HCT116 (cell line): ENCODE measurements at regions of chr2 and their contacts with region 1.

Region 1: GRCh38 chr2:219543601-219544358 is at the starts of genes CHPF and TMEM198:
- DNase-seq: peak; percentile 97
- ATAC-seq: peak; percentile 71
- H3K4me3 ChIP-seq: peak within 1 kb of the TSS; percentile 75 to 99
- H3K27ac ChIP-seq: peak within 1 kb of the TSS; percentile 97
- H3K4me1 ChIP-seq: peaks cover under 1 to 47% of the 10 kb centered on the region in 2 experiments; a peak in 3 of 4 replicates
- H3K27me3 ChIP-seq: no peaks in the 10 kb centered on the region
- CTCF ChIP-seq: no peak
- POLR2A ChIP-seq: peak; percentile 21
- RAD21 ChIP-seq: no peak
- total RNA-seq, gene CHPF: 228 TPM
- total RNA-seq, gene TMEM198: 2.1 TPM

Region 2: DNA sequence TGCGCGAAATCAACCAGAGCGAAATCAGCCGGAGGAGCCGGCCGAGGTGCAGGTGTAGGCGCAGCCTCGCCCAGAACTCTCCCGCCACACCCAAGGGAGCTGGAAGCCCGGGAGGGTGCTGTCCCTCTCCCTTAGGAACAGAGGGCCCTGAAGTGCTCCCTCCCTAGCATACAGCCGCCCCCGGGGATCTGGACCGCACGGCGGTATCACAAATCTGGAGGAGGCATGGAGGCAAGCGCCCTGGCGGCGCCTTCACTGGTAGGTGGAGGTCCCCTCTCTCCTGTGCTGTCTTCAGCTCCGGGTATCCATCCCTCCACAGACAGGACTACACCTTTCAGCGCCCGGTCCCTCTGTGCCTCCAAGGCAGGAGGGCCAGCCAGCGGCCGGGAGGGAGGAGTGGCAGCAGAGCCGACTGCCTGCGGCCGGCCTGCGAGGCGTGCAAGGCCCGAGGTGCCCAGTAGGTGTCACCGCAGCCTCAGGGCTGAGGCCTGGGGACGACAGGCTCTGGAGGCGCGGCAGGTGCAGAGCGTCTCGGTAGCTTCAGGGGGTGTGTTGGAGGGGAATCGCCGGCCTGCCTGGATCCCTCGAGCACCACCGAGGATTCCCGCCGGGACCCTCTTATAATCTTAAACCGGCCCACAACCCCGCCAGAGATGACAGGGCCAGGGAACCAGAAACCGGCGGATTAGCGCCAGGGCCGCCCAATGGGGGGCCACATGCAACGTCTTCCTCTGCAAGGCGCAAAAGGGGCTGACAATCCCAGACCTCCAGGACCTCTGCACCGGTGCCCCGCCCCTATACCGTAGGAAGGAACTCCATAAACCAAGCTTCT is 485.9 kb before region 1 on chr2:
- CTCF ChIA-PET with region 1: no interaction called
- POLR2A ChIA-PET with region 1: no interaction called
- RAD21 ChIA-PET with region 1: no interaction called
- intact Hi-C with region 1: loop called (anchors 5 kb)
- DNase-seq: peak; percentile 26
- ATAC-seq: peak; percentile 97
- H3K4me3 ChIP-seq: no peak overlapping the region
- H3K27ac ChIP-seq: no peak overlapping the region
- H3K4me1 ChIP-seq: no peaks in the 10 kb centered on the region
- H3K27me3 ChIP-seq: peaks cover 16% of the 10 kb centered on the region; the same call in 1 of the 2 replicates
- CTCF ChIP-seq: peak; percentile 83 to 92 (median 87)
- POLR2A ChIP-seq: no peak
- RAD21 ChIP-seq: peak; percentile 96

Region 3: GRCh38 chr2:219597552-219598307 is 54.0 kb after region 1 on chr2 and contains the start of gene STK11IP:
- CTCF ChIA-PET with region 1: interaction called, 3 read pairs
- POLR2A ChIA-PET with region 1: no interaction called
- RAD21 ChIA-PET with region 1: interaction called in 1 of 2 experiments, 6 read pairs
- intact Hi-C with region 1: loop called (anchors 2 kb)
- DNase-seq: peak; percentile 95
- ATAC-seq: peak; percentile 95
- H3K4me3 ChIP-seq: peak within 1 kb of the TSS; percentile 94 to 95
- H3K27ac ChIP-seq: peak within 1 kb of the TSS; percentile 86
- H3K4me1 ChIP-seq: peaks cover 8 to 28% of the 10 kb centered on the region in 2 experiments; a peak in 3 of 4 replicates
- H3K27me3 ChIP-seq: no peaks in the 10 kb centered on the region
- CTCF ChIP-seq: no peak
- POLR2A ChIP-seq: peak; percentile 76
- RAD21 ChIP-seq: no peak
- total RNA-seq, gene STK11IP: 45.0 TPM

Region 4: DNA sequence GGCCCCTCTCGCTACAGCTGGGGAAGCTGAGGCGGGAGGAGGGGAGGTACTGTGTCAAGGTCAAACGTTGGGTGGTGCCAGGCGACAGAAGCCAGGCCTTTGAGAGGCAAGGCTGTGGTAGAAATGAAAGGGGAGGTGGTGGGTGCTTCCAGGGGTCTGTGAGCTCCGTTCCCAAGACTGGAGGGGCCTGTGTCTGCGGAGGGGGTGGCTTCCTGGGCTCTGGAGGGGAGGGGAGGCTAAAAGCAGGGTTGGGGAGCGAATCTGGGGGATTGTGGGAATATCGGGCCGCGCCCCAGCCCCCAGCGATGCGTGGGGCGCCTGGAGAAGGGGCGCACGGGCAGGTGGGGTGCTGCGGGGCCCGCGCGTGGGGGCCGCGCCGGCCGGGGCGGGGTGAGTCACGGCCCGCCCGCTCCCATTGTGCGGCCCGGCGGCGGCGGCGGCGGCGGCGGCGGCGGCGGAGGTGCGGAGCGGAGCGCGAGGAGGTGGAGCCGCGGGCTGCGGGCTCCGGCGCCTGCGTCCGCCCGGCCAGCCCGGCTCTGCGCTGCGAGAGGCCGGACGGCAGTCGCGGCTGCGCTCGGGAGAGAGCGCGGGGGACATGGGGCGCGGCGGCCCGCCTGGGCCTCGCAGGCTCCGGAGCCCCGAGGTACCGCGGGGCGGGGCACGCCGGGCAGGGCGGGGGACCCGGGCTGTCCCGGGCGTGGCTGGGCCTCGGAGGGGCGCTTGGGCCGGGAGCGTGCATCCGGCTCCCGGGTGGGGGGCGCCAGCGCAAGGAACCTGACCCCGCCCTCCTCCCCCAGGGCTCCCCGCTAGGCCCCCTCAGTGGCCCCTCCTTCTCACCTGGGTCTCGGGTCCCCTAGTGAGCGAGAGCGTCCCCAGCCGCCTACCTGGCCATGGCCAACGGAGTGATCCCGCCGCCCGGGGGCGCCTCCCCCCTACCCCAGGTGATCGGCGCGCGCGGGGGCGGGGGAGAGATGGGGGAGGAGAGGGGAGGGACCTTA is 83.6 kb after region 1 on chr2 and contains the start of gene SLC4A3:
- CTCF ChIA-PET with region 1: no interaction called
- POLR2A ChIA-PET with region 1: no interaction called
- RAD21 ChIA-PET with region 1: no interaction called
- intact Hi-C with region 1: loop called (anchors 5 kb)
- DNase-seq: no peak
- ATAC-seq: peak; percentile 82
- H3K4me3 ChIP-seq: peak within 1 kb of the TSS; percentile 56 to 79
- H3K27ac ChIP-seq: peak within 1 kb of the TSS; percentile 76
- H3K4me1 ChIP-seq: peaks cover 4 to 32% of the 10 kb centered on the region in 2 experiments; a peak in 3 of 4 replicates
- H3K27me3 ChIP-seq: no peaks in the 10 kb centered on the region
- CTCF ChIP-seq: peak in 2 of 3 experiments; percentile 16 to 22; a peak in 2 of 6 replicates
- POLR2A ChIP-seq: peak; percentile 32
- RAD21 ChIP-seq: no peak
- total RNA-seq, gene SLC4A3: 23.0 TPM

Region 5: GRCh38 chr2:219642465-219643080 is 98.8 kb after region 1 on chr2:
- CTCF ChIA-PET with region 1: interaction called, 6 read pairs
- POLR2A ChIA-PET with region 1: no interaction called
- RAD21 ChIA-PET with region 1: interaction called in 1 of 2 experiments, 3 read pairs
- intact Hi-C with region 1: loop called (anchors 1 kb)
- DNase-seq: peak; percentile 88
- ATAC-seq: peak; percentile 78
- H3K4me3 ChIP-seq: no peak overlapping the region
- H3K27ac ChIP-seq: peak overlapping the region; percentile 47
- H3K4me1 ChIP-seq: peaks cover 24 to 56% of the 10 kb centered on the region in 2 experiments
- H3K27me3 ChIP-seq: no peaks in the 10 kb centered on the region
- CTCF ChIP-seq: peak; percentile 98 to 100 (median 99)
- POLR2A ChIP-seq: no peak
- RAD21 ChIP-seq: peak; percentile 97

Region 6: GRCh38 chr2:219689676-219690628 is 146.2 kb after region 1 on chr2:
- CTCF ChIA-PET with region 1: interaction called, 15 read pairs
- POLR2A ChIA-PET with region 1: interaction called, 7 read pairs
- RAD21 ChIA-PET with region 1: no interaction called
- intact Hi-C with region 1: loop called (anchors 1 kb)
- DNase-seq: no peak
- ATAC-seq: no peak
- H3K4me3 ChIP-seq: peak overlapping the region; percentile 61 to 72
- H3K27ac ChIP-seq: peak overlapping the region; percentile 98
- H3K4me1 ChIP-seq: peaks cover 61 to 96% of the 10 kb centered on the region in 2 experiments
- H3K27me3 ChIP-seq: no peaks in the 10 kb centered on the region
- CTCF ChIP-seq: peak in 2 of 3 experiments; percentile 31 to 73; a peak in 4 of 6 replicates
- POLR2A ChIP-seq: no peak
- RAD21 ChIP-seq: no peak

Region 7: DNA sequence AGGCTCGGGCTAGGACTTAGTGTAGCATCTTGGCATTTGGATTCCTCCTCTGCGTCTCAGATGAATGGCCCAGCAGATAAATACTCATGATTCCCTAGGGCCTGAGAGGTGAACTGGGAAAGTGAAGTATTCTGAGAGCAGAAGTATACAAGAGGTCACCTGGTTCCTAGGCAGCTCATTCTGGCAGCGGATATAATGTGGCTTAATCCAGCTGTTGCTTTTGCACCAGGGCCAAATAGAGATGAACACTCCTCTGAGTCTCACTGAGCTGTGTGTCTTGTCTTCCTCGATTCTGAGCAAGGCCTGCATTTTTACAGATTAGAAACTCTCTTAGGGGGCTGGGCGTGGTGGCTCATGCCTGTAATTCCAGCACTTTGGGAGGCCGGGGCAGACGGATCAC is 279.8 kb after region 1 on chr2:
- CTCF ChIA-PET with region 1: no interaction called
- POLR2A ChIA-PET with region 1: no interaction called
- RAD21 ChIA-PET with region 1: no interaction called
- intact Hi-C with region 1: no loop called
- DNase-seq: no peak
- ATAC-seq: no peak
- H3K4me3 ChIP-seq: no peak overlapping the region
- H3K27ac ChIP-seq: no peak overlapping the region
- H3K4me1 ChIP-seq: no peaks in the 10 kb centered on the region
- H3K27me3 ChIP-seq: no peaks in the 10 kb centered on the region
- CTCF ChIP-seq: no peak
- POLR2A ChIP-seq: no peak
- RAD21 ChIP-seq: no peak